ENCODE measurements at regions of chr6 and their contacts with region 1.

Region 1: GRCh38 chr6:136792410-136793262 is at the start of gene MAP3K5:
- DNase-seq: peak; percentile 89 to 97 (median 96)
- ATAC-seq: peak; percentile 79
- H3K4me3 ChIP-seq: peak within 1 kb of the TSS; percentile 74
- H3K4me3 Mint-ChIP-seq: peak within 1 kb of the TSS; percentile 97
- H3K27ac ChIP-seq: peak within 1 kb of the TSS; percentile 88 to 98
- H3K27ac Mint-ChIP-seq: peak within 1 kb of the TSS; percentile 99
- H3K4me1 ChIP-seq: peaks cover 22% of the 10 kb centered on the region
- H3K4me1 Mint-ChIP-seq: peaks cover 40% of the 10 kb centered on the region
- H3K27me3 ChIP-seq: no peaks in the 10 kb centered on the region
- H3K27me3 Mint-ChIP-seq: no peaks in the 10 kb centered on the region
- CTCF ChIP-seq: peak; percentile 93
- total RNA-seq, gene MAP3K5: 12.9 to 14.1 TPM

Region 2: GRCh38 chr6:136289579-136290409 is 502.8 kb before region 1 on chr6 and contains the start of gene BCLAF1:
- CTCF ChIA-PET with region 1: interaction called, 3 read pairs
- POLR2A ChIA-PET with region 1: interaction called, 55 read pairs
- intact Hi-C with region 1: loop called (anchors 10 kb)
- DNase-seq: peak; percentile 99 to 100 (median 99)
- ATAC-seq: peak; percentile 70
- H3K4me3 ChIP-seq: peak within 1 kb of the TSS; percentile 88
- H3K4me3 Mint-ChIP-seq: peak within 1 kb of the TSS; percentile 97
- H3K27ac ChIP-seq: peak within 1 kb of the TSS; percentile 100
- H3K27ac Mint-ChIP-seq: peak within 1 kb of the TSS; percentile 99
- H3K4me1 ChIP-seq: peaks cover 52% of the 10 kb centered on the region
- H3K4me1 Mint-ChIP-seq: peaks cover 47% of the 10 kb centered on the region
- H3K27me3 ChIP-seq: no peaks in the 10 kb centered on the region
- H3K27me3 Mint-ChIP-seq: peaks cover 3% of the 10 kb centered on the region
- CTCF ChIP-seq: peak; percentile 7
- total RNA-seq, gene BCLAF1: 484 to 501 TPM

Region 3: DNA sequence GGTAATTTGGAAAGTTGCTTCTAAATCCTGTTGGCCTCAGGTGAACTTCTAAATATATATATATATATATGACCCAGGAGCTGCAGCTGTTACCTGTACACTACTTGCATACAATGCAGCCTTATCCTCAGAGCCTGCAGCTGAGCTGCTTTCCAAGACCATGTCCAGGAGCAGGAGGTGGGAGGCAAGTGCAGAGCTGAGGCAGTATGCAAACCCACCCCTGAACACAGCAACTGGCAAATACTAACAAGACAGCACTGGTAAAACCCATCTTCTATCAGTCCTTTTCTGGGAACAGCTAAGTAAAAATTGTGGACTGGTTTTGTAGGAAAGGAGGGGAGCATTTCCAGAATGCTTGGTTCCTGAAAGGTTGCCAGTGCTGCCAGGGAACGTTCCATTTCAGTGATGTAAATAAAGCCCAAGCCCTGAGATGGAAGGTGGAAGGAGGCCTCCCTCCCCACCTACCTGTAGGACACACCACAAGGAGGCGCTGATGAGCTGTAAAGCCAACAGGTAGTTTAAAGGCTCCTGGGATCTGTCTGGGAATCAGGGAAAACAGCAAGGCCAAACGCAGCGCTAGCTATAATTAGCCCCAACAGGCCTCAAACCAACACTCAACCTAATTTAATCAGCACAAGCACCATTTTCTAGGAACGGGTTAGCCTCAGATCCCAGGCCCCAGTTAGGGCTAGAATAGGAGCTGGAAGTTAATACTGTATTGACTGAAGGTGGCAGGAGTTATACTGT is 148.6 kb before region 1 on chr6:
- CTCF ChIA-PET with region 1: interaction called, 224 read pairs
- POLR2A ChIA-PET with region 1: interaction called, 147 read pairs
- intact Hi-C with region 1: loop called (anchors 1 kb)
- DNase-seq: peak; percentile 67 to 91 (median 80)
- ATAC-seq: peak; percentile 61
- H3K4me3 ChIP-seq: no peak overlapping the region
- H3K4me3 Mint-ChIP-seq: no peak overlapping the region
- H3K27ac ChIP-seq: no peak overlapping the region
- H3K27ac Mint-ChIP-seq: no peak overlapping the region
- H3K4me1 ChIP-seq: peaks cover 16% of the 10 kb centered on the region
- H3K4me1 Mint-ChIP-seq: no peaks in the 10 kb centered on the region
- H3K27me3 ChIP-seq: no peaks in the 10 kb centered on the region
- H3K27me3 Mint-ChIP-seq: no peaks in the 10 kb centered on the region
- CTCF ChIP-seq: peak; percentile 90

Region 4: GRCh38 chr6:136696238-136696637 is 96.4 kb before region 1 on chr6:
- CTCF ChIA-PET with region 1: interaction called, 42 read pairs
- POLR2A ChIA-PET with region 1: interaction called, 8 read pairs
- intact Hi-C with region 1: loop called in 1 of 2 experiments (anchors 5 kb)
- DNase-seq: no peak
- ATAC-seq: no peak
- H3K4me3 ChIP-seq: no peak overlapping the region
- H3K4me3 Mint-ChIP-seq: no peak overlapping the region
- H3K27ac ChIP-seq: no peak overlapping the region
- H3K27ac Mint-ChIP-seq: no peak overlapping the region
- H3K4me1 ChIP-seq: peaks cover 4% of the 10 kb centered on the region
- H3K4me1 Mint-ChIP-seq: peaks cover 12% of the 10 kb centered on the region
- H3K27me3 ChIP-seq: no peaks in the 10 kb centered on the region
- H3K27me3 Mint-ChIP-seq: no peaks in the 10 kb centered on the region
- CTCF ChIP-seq: no peak

Region 5: DNA sequence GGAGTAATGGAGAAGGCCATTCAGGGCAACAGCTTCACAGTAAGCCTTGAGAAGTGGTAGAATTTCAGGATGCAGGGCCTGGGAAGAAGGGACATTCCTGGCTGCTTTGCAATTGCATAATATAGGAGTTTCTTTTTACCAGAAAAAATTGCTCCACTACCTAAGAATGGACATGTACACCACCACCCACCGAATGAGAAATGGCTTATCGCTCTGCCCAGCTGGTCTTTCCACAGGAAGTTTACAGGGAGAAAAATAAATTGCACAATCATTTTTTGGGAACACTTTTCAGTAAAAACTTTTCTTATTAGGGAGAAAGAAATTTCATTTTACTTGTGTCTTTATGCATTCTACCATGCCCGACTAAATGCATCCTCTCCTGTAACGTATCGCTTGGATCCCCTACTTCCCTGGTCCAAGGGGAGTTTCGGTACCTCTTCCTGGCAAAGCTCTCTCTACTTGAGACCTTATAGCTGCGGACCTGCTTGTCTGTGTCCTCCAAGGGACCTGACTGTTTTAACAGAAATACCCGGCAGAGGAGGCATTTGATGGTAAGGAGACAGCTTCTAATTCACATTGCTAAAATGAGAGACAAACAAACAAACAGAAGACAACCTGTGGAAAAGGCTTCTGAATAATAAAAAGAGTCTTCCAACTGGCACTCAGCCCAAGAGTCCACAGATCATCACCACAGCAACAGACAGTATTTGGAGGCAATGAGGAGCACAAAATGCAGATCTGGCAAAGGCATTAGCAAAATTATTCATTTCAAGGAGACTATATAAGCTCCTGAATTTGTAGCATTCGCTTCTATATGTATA is 54.6 kb before region 1 on chr6:
- CTCF ChIA-PET with region 1: interaction called, 52 read pairs
- POLR2A ChIA-PET with region 1: interaction called, 41 read pairs
- intact Hi-C with region 1: no loop called
- DNase-seq: no peak
- ATAC-seq: no peak
- H3K4me3 ChIP-seq: no peak overlapping the region
- H3K4me3 Mint-ChIP-seq: no peak overlapping the region
- H3K27ac ChIP-seq: no peak overlapping the region
- H3K27ac Mint-ChIP-seq: no peak overlapping the region
- H3K4me1 ChIP-seq: peaks cover 18% of the 10 kb centered on the region
- H3K4me1 Mint-ChIP-seq: peaks cover 28% of the 10 kb centered on the region
- H3K27me3 ChIP-seq: no peaks in the 10 kb centered on the region
- H3K27me3 Mint-ChIP-seq: no peaks in the 10 kb centered on the region
- CTCF ChIP-seq: no peak

Region 6: DNA sequence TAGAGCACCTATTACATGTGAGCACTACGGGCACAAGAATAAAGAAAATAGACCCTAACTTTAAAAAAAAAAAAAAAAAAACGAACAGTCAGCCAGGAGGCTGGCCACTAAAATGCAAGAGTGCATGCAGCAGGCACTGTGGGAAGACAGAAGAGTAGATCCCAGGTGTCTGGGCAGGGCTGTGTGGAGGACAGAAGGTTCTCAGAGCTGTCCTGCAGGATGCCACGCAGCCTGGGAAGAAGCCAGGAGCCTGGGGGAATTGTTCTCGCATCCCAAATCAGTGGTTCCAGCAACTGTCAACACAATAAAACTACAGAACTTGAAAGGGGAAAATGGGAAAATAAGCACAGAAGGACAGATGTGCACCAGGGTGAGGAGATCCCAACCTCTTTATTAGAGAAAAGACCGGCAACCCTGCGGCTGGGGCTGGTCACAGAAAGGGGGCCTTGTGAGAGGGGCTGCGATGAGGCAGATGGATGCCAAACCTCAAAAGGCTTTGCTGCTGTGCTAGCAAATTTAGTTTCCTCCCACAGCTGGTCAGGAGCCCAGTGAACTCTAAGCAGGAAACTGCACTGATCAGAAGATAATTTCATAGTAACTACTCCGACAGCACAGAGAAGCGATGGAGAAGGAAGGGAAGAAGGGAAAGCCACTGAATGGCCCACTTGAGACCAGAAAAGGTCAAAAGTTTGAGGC is 31.3 kb before region 1 on chr6:
- CTCF ChIA-PET with region 1: interaction called, 57 read pairs
- POLR2A ChIA-PET with region 1: interaction called, 151 read pairs
- intact Hi-C with region 1: no loop called
- DNase-seq: peak in 5 of 14 experiments; percentile 12 to 78 (median 51)
- ATAC-seq: peak; percentile 52
- H3K4me3 ChIP-seq: peak overlapping the region; percentile 42
- H3K4me3 Mint-ChIP-seq: peak overlapping the region; percentile 73
- H3K27ac ChIP-seq: peak overlapping the region; percentile 22 to 51
- H3K27ac Mint-ChIP-seq: peak overlapping the region; percentile 82
- H3K4me1 ChIP-seq: peaks cover 75% of the 10 kb centered on the region
- H3K4me1 Mint-ChIP-seq: peaks cover 68% of the 10 kb centered on the region
- H3K27me3 ChIP-seq: no peaks in the 10 kb centered on the region
- H3K27me3 Mint-ChIP-seq: no peaks in the 10 kb centered on the region
- CTCF ChIP-seq: no peak

Region 7: DNA sequence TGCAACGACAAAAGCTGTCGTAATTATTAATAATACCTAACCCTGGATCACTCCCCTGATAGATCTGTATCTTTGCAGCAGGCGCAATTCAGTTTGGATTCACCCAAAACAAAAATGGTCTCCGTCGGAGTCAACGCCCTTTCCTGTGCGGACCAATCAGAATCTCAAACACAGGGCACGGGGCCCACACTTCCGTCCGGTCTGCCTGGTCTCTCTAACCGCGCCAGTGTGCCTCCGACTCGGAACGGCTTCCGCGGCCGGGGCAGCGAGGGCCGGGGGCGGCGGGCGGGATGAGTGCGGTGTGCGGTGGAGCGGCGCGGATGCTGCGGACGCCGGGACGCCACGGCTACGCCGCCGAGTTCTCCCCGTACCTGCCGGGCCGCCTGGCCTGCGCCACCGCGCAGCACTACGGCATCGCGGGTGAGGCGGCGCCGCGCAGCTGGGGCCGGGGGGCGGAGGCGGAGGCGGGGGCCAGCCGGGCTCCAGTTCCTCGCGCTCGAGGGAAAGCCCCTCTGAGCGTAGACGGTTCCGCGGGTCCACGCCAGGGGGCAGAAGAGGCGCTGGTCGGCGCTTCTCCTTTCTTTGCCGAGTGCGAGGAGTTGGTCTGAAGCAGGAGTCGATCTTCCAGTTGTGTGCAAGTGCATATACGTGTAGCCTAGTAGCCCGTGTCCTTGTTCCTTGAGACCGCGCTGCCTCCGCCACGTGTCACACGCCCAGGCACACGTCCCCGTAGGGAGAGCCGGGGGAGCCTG is 29.9 kb after region 1 on chr6 and contains the start of gene PEX7:
- CTCF ChIA-PET with region 1: interaction called, 13 read pairs
- POLR2A ChIA-PET with region 1: interaction called, 56 read pairs
- intact Hi-C with region 1: loop called (anchors 1 to 2 kb)
- DNase-seq: peak; percentile 71 to 95 (median 82)
- ATAC-seq: peak; percentile 90
- H3K4me3 ChIP-seq: peak within 1 kb of the TSS; percentile 73
- H3K4me3 Mint-ChIP-seq: peak within 1 kb of the TSS; percentile 95
- H3K27ac ChIP-seq: peak within 1 kb of the TSS; percentile 32 to 77
- H3K27ac Mint-ChIP-seq: peak within 1 kb of the TSS; percentile 90
- H3K4me1 ChIP-seq: peaks cover 12% of the 10 kb centered on the region
- H3K4me1 Mint-ChIP-seq: peaks cover 45% of the 10 kb centered on the region
- H3K27me3 ChIP-seq: no peaks in the 10 kb centered on the region
- H3K27me3 Mint-ChIP-seq: peaks cover 5% of the 10 kb centered on the region
- CTCF ChIP-seq: peak; percentile 66
- total RNA-seq, gene PEX7: 2.0 to 3.4 TPM